ENCODE measurements at regions of chr20 and their contacts with region 1.

Region 1: GRCh38 chr20:37192137-37192854 is 12.9 kb upstream of the MROH8 start:
- DNase-seq: peak; percentile 83
- ATAC-seq: peak; percentile 72
- H3K4me3 Mint-ChIP-seq: no peak overlapping the region
- H3K27ac Mint-ChIP-seq: peak overlapping the region; percentile 49
- H3K4me1 Mint-ChIP-seq: peaks cover 76% of the 10 kb centered on the region
- H3K27me3 Mint-ChIP-seq: no peaks in the 10 kb centered on the region

Region 2: GRCh38 chr20:37202267-37202943 is 10.1 kb after region 1 on chr20:
- CTCF ChIA-PET with region 1: interaction called, 15 read pairs
- POLR2A ChIA-PET with region 1: interaction called, 4 read pairs
- intact Hi-C with region 1: no loop called
- DNase-seq: peak; percentile 32
- ATAC-seq: peak; percentile 53
- H3K4me3 Mint-ChIP-seq: no peak overlapping the region
- H3K27ac Mint-ChIP-seq: no peak overlapping the region
- H3K4me1 Mint-ChIP-seq: no peaks in the 10 kb centered on the region
- H3K27me3 Mint-ChIP-seq: no peaks in the 10 kb centered on the region

Region 3: DNA sequence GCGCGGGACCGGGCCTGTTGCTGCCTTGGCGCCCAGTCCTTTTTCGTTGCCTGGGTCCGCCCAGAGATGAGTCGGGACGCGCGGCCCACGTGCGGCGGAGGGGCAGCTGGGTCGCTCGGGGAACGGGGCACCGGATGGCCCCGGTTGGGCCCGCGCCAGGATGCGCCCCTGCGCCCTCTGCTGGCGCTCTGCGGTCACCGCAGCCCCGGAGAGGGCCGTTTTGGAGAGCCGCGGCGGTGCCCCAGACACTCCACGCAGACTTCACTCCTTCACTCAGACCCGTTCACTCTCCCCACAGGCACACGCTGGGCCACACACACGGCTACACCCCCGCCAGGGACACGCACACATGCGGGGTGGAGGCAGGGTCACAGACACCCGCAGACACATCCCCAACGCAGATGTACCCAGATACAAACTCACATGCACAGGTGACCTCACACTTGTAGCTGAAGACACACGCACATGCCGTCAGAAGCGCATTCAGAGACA is 192.4 kb after region 1 on chr20:
- CTCF ChIA-PET with region 1: interaction called, 5 read pairs
- POLR2A ChIA-PET with region 1: no interaction called
- intact Hi-C with region 1: loop called in 1 of 2 experiments (anchors 1 kb)
- DNase-seq: peak; percentile 86
- ATAC-seq: peak; percentile 94
- H3K4me3 Mint-ChIP-seq: peak overlapping the region; percentile 59
- H3K27ac Mint-ChIP-seq: peak overlapping the region; percentile 43
- H3K4me1 Mint-ChIP-seq: peaks cover 8% of the 10 kb centered on the region
- H3K27me3 Mint-ChIP-seq: peaks cover 4% of the 10 kb centered on the region

Region 4: DNA sequence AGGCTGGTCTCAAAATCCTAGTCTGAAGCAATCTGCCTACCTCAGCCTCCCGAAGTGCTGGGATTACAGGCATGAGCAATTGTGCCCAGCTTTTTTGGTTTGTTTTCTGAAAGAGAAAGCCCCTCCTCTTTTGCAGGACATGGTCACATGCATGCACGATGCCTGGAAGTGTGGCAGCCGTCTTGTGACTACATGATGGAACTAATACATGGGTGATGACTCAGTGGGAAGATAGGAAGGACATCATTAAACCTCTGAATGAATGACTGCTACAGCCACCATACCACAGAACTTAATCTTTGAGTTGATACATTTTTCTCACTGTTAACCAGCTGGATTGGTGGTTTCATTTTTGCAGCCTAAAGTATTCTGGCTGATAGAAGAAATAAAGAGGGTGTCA is 488.1 kb after region 1 on chr20:
- CTCF ChIA-PET with region 1: no interaction called
- POLR2A ChIA-PET with region 1: no interaction called
- intact Hi-C with region 1: no loop called
- DNase-seq: no peak
- ATAC-seq: peak; percentile 47
- H3K4me3 Mint-ChIP-seq: no peak overlapping the region
- H3K27ac Mint-ChIP-seq: no peak overlapping the region
- H3K4me1 Mint-ChIP-seq: no peaks in the 10 kb centered on the region
- H3K27me3 Mint-ChIP-seq: peaks cover 24% of the 10 kb centered on the region

Measured in activated CD4-positive, alpha-beta T cell treated with anti-CD3 and anti-CD28 coated beads for 36 hours (primary cell).